Activated CD8-positive, alpha-beta T cell treated with anti-CD3 and anti-CD28 coated beads, Interleukin-2, amount 10 ng/mL, durations not matched to agents 7 days and 5 days (primary cell): ENCODE measurements at regions of chr2 and their contacts with region 1.

Region 1: DNA sequence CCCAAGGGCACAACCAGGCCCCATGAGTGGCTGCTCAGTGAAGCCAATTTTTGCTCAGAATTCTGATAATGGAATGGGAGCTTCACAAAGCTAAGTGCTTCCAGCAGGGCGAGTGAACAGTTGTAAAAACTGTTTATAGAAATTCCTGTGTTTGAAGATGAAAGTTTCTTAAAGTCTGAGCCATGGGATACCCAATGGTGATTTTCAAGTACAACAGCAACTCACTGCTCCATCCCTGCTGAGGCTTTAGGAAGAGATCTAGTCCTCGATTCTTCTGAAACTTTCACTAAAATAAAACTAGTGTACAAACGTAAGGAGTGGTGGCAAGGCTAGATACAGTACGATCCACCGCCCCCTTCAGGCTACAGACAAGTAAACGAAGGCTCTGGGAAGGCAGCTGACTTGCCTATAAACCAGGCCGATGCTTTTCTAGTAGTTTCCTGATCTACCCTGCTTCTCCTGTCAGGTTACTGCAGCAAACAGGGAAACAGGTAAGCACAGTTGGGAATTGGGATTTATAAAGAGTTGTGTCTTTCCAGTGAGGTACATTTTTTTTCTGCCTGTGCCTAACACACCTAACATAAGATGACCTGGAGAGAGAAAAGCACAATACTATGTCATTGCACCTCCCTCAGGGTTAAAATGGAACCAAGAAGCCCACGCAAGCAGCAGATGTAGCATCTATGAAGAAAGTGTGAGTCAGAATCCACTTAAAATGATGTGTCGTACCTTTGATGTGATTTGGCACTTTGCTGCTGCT is 108.7 kb downstream of the UXS1 start:
- DNase-seq: peak; percentile 80
- ATAC-seq: peak; percentile 89
- H3K4me3 Mint-ChIP-seq: peak overlapping the region; percentile 37
- H3K27ac Mint-ChIP-seq: peak overlapping the region; percentile 75
- H3K4me1 Mint-ChIP-seq: peaks cover 60% of the 10 kb centered on the region
- H3K27me3 Mint-ChIP-seq: no peaks in the 10 kb centered on the region

Region 2: DNA sequence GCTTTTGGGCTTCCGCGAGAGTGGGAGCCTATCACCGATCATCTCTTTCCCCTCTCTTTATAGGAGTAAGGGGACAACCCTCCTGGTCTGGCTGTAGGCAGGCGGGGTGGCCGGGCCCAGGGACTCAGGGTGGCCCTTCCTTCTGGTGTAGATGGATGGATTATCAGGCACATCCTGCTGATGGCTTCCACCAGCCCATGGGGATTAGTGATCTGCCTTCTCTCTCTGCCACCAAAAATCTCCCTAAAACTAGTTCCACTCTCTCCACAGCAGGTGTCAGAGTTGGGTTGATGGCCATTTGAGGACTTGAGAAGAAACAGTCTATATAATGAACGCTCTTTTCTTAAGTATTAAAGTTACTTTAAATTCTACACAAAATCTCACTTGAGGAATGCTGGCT is 303.2 kb before region 1 on chr2:
- CTCF ChIA-PET with region 1: interaction called, 16 read pairs
- POLR2A ChIA-PET with region 1: interaction called, 4 read pairs
- DNase-seq: no peak
- ATAC-seq: no peak
- H3K4me3 Mint-ChIP-seq: peak overlapping the region; percentile 40
- H3K27ac Mint-ChIP-seq: peak overlapping the region; percentile 72
- H3K4me1 Mint-ChIP-seq: peaks cover 90% of the 10 kb centered on the region
- H3K27me3 Mint-ChIP-seq: no peaks in the 10 kb centered on the region

Region 3: DNA sequence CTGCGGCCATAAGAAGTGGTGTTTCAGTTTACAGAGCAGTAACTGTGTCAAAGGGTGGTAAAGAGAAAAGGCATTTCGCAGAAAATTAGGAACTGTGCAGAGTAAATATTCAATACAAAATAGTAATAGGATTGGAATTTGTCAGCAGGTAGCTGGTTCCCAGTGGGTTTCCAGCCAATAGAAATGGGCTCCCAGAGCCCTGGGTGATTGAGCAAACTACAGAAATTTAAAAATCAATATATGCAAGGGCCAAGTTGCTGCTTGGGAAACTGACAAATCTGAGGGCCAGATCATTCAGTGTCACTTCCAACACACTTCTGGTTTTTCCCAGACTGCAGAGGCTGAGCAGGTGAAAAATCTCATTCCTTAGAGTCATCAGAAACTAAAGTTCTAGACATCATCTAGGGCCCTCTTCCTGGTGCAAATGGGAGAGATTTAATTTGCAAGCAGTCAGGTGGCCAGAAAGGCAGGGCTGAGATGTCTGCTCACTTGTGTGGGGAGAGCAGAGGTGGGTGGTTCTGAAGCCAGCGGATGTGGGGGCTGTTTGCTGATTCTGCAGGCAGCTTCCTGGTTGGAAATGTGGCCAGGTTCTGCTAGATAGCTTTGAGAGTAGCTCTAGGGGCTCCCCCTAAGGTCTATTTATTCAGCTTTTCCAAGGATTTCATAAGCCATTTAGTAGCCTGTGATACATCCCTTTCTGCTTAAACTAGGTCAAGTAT is 158.2 kb before region 1 on chr2:
- CTCF ChIA-PET with region 1: interaction called, 14 read pairs
- POLR2A ChIA-PET with region 1: no interaction called
- DNase-seq: peak; percentile 87
- ATAC-seq: peak; percentile 84
- H3K4me3 Mint-ChIP-seq: peak overlapping the region; percentile 28
- H3K27ac Mint-ChIP-seq: peak overlapping the region; percentile 91
- H3K4me1 Mint-ChIP-seq: peaks cover 57% of the 10 kb centered on the region
- H3K27me3 Mint-ChIP-seq: no peaks in the 10 kb centered on the region

Region 4: DNA sequence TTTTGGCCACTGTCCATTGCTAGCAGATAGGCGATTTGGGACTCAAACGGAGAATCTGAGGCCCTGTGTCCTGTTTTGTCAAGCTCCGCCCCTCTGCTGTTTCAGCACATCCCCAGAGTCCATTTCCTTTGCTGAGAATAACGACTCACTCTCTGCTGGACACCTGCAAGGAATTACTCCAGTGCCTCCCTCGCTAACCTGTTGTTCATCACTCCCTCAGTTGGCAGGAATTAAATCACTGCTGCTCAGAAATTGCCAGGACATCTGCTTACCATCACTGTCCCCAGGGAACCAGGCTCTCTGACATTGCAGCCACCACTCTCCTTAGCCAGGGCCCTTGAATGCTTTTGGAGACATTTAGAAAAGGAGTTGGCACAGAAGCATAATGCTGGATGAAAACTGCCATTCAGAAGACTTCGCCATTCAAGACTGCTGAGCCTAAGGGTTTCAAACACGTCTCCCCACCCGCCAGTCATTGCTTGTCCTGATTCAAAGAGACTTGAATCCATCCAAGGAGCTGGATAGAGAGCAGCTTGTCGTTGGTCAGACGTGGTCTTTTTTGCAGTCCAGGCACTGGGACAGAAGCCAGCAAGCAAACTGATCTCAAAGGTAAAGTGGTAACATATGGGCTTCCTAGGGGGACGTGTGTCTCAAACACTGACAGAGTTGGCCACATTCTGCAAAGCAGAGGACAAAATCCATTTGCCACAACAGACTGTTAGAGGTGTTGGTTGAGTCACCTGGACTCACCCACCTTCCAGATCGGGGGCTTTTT is 46.6 kb before region 1 on chr2:
- CTCF ChIA-PET with region 1: no interaction called
- POLR2A ChIA-PET with region 1: no interaction called
- DNase-seq: no peak
- ATAC-seq: no peak
- H3K4me3 Mint-ChIP-seq: no peak overlapping the region
- H3K27ac Mint-ChIP-seq: no peak overlapping the region
- H3K4me1 Mint-ChIP-seq: peaks cover 9% of the 10 kb centered on the region
- H3K27me3 Mint-ChIP-seq: peaks cover 7% of the 10 kb centered on the region

Region 5: GRCh38 chr2:106095478-106096298 is 10.3 kb after region 1 on chr2:
- CTCF ChIA-PET with region 1: interaction called, 44 read pairs
- POLR2A ChIA-PET with region 1: interaction called, 12 read pairs
- DNase-seq: peak; percentile 92
- ATAC-seq: peak; percentile 87
- H3K4me3 Mint-ChIP-seq: peak overlapping the region; percentile 69
- H3K27ac Mint-ChIP-seq: peak overlapping the region; percentile 89
- H3K4me1 Mint-ChIP-seq: peaks cover 69% of the 10 kb centered on the region
- H3K27me3 Mint-ChIP-seq: no peaks in the 10 kb centered on the region